ENCODE measurements at regions of chr18 and their contacts with region 1.

Region 1: DNA sequence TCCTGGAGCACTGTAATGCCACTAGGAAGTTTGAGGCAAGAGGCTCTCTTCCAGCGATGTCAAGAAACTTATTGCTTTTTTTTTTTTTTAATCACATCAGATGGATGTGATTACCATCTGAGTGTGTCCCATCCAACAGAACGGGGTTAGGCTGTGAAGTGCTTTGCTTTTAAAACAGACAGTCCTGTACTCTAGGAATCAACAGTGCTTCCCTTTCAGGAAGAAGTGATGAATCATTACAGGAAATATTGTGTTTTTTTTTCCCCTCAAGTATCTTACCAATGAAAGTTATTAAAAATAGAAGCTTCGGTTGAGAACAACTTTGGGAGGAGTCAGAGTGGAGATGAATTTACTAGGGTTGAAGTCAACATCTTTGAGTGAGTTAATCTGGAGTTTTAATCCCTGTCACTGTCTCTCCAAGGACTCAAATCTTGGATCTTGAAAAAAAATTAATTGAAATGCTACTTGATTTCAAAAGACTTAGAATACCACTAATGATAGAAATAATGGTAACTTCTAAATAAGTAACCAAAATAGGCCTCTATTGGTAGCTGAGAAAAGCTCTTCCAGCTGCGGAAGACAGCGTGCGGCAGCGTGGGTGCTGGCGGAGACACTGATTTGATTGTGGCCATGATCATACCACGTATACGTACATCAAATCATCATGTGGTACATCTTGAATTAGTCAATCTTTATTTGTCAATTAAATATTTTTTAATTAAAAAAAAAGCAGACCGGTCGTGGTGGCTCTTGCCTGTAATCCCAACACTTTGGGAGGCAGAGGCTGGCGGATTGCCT is 45.5 kb downstream of the GATA6 start:
- DNase-seq: no peak
- H3K4me3 Mint-ChIP-seq: no peak overlapping the region
- H3K27ac Mint-ChIP-seq: peak overlapping the region; percentile 39
- H3K4me1 Mint-ChIP-seq: peaks cover 33% of the 10 kb centered on the region
- H3K27me3 Mint-ChIP-seq: no peaks in the 10 kb centered on the region
- CTCF ChIP-seq: no peak

Region 2: DNA sequence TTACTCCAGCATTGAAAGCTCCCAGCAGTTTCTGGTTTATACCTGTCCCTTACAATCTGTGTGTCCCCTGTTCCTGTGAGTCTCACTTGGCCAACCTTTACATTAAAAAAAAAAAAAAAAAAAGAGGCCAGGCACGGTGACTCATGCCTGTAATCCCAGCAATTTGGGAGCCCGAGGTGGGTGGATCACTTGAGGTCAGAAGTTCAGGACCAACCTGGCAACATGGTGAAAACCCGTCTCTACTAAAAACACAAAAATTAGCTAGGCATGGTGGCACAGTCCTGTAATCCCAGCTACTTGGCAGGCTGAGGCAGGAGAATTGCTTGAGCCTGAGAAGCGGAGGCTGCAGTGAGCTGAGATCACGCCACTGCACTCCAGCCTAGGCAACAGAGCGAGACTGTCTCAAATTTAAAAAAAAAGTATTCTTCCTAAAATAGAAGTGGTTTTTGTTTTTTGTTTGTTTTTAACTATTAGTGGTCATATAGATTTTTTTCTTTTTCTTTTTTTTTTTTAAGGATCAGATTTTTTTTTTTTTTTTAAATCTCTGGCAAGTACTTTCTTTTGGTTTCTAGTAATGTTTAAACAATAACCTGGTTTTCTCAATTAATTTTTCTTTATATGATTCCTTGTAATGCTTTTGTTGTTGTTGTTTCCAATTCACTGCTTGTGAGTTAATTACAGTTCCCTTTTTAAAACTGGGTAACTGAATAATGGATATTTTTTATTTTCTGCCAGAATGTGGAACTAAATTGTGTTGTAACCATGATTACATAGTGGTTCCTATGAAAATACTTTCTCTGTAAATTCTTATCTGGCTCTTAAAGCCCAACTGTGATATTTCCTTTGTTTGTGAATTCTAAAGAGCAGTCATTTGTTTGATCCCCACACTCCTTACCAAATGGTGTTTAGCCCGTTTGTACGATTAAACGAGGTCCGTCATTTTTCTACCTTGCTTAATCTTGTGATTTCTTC is 86.0 kb after region 1 on chr18:
- CTCF ChIA-PET with region 1: no interaction called
- intact Hi-C with region 1: no loop called
- DNase-seq: peak; percentile 65
- H3K4me3 Mint-ChIP-seq: no peak overlapping the region
- H3K27ac Mint-ChIP-seq: peak overlapping the region; percentile 76
- H3K4me1 Mint-ChIP-seq: peaks cover 30% of the 10 kb centered on the region
- H3K27me3 Mint-ChIP-seq: no peaks in the 10 kb centered on the region
- CTCF ChIP-seq: no peak

Region 3: DNA sequence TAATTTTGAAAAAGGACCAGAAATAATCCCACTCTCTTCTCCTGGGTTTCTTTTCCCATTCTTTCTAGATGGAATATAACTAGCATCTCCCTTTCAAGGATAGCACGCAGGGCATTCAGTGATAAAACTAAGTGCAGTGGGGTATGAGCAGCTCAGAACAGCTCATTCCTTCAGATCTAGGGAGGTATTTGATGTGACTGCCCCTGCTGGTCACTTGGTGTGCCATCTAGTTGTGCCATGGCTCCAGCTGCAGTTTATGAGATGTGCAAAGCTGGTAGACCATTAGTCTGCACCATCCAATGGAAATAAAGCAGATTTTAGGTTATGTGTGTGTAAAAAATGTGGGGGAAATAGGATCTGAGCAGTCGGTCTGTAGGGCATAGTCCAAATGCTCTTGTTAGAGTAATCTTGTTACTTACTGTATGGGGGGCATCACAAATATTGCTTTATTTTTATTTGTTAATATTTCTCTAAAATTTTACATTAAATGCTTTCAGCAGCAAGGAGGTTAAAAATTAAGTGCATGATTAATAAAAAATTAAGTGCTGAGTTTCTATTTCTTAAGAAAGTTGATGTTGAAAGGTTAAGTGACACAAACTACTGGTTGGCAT is 163.8 kb after region 1 on chr18:
- CTCF ChIA-PET with region 1: no interaction called
- intact Hi-C with region 1: loop called (anchors 10 kb)
- DNase-seq: peak; percentile 63
- H3K4me3 Mint-ChIP-seq: no peak overlapping the region
- H3K27ac Mint-ChIP-seq: no peak overlapping the region
- H3K4me1 Mint-ChIP-seq: peaks cover 12% of the 10 kb centered on the region
- H3K27me3 Mint-ChIP-seq: no peaks in the 10 kb centered on the region
- CTCF ChIP-seq: peak; percentile 65